ENCODE measurements at regions of chr18 and their contacts with region 1.

Region 1: GRCh38 chr18:9136315-9137155 is at the start of gene ANKRD12:
- DNase-seq: peak; percentile 98
- ATAC-seq: peak; percentile 77
- H3K4me3 Mint-ChIP-seq: peak within 1 kb of the TSS; percentile 96
- H3K27ac Mint-ChIP-seq: peak within 1 kb of the TSS; percentile 99
- H3K4me1 Mint-ChIP-seq: peaks cover 56% of the 10 kb centered on the region
- H3K27me3 Mint-ChIP-seq: no peaks in the 10 kb centered on the region
- total RNA-seq, gene ANKRD12: 60.8 to 68.9 TPM

Region 2: DNA sequence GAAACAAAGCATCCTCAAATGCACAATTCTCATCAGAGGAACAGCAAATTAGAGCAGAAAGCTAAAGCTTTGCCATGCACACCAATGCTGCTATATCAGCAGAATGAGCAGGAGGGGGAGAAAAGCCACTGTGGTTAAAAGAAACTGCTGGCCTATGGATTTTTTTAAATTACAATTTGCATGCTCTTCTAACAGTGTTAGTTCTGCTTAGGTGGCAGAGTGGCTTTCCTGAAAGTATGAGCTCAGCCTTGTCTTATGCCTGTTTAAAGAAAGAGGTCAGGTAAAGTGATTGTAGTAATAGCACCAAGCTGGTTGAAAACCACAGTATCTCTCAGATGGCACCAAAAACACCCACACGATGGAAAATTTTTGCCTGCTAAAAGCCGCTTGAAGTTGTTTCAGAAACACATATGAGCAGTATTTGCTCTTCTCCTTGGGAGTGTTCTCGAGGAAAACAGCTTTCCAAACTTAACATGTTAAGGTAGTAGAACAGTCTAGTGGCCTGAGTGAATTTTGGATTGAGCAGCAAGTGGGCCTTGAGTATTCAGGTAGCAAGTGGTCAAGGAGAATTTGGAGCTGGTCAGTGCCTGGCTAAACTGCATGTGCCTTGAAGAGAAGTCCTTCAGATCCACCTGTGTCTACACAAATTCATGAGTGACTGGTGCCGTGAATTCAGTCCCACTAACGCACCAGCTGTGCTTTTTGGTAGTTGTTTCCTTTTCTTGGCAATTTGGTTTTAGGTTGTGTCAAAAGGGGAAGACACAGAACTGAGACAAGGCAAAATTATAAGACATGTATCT is 53.6 kb before region 1 on chr18:
- CTCF ChIA-PET with region 1: interaction called, 9 read pairs
- POLR2A ChIA-PET with region 1: interaction called, 62 read pairs
- DNase-seq: peak; percentile 66
- ATAC-seq: peak; percentile 85
- H3K4me3 Mint-ChIP-seq: peak overlapping the region; percentile 56
- H3K27ac Mint-ChIP-seq: peak overlapping the region; percentile 94
- H3K4me1 Mint-ChIP-seq: peaks cover 48% of the 10 kb centered on the region
- H3K27me3 Mint-ChIP-seq: no peaks in the 10 kb centered on the region

Region 3: DNA sequence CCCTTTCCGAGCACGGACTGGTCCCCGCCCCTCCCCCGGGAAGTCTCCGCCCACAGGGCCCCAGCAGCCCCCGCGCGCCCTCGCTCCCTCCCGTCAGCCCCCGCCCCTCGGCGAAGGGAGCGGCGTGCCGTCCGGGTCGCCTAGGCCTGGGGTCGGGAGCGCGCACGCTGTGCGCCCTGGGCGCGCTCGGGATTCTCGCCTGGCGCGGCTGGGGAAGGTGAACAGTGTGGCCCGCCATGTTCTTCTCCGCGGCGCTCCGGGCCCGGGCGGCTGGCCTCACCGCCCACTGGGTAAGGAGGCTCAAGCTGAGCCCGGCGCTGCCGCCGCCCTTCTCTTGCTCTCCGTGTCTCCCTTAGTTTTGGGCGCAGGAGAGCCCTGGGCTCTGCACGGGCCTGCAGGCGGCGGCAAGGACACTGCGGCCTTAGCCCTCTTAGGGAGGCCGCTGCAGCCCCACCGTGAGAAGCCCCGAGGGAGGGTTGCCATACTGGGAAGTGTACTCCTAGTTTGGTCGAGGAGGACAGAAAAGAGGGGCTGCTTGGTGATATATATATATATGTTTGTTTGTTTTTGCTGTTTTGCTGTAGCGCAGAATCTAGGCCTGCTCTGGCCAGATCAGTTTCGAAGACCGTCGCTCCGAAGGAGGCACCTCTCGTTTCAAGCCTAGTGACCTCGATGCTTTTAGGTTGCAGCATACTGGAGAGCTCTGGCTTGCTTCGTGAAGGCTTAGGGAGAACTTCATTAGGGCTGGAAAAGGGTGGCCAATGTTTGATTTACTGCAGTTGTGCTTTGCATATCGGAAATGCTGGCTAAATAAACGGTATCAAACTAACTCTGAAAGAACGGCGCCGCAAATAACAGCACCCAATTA is 33.8 kb before region 1 on chr18 and contains the start of gene NDUFV2:
- CTCF ChIA-PET with region 1: interaction called, 49 read pairs
- POLR2A ChIA-PET with region 1: interaction called, 230 read pairs
- DNase-seq: peak; percentile 98
- ATAC-seq: peak; percentile 91
- H3K4me3 Mint-ChIP-seq: peak within 1 kb of the TSS; percentile 89
- H3K27ac Mint-ChIP-seq: peak within 1 kb of the TSS; percentile 97
- H3K4me1 Mint-ChIP-seq: peaks cover 48% of the 10 kb centered on the region
- H3K27me3 Mint-ChIP-seq: no peaks in the 10 kb centered on the region
- total RNA-seq, gene NDUFV2: 200 to 206 TPM

Region 4: DNA sequence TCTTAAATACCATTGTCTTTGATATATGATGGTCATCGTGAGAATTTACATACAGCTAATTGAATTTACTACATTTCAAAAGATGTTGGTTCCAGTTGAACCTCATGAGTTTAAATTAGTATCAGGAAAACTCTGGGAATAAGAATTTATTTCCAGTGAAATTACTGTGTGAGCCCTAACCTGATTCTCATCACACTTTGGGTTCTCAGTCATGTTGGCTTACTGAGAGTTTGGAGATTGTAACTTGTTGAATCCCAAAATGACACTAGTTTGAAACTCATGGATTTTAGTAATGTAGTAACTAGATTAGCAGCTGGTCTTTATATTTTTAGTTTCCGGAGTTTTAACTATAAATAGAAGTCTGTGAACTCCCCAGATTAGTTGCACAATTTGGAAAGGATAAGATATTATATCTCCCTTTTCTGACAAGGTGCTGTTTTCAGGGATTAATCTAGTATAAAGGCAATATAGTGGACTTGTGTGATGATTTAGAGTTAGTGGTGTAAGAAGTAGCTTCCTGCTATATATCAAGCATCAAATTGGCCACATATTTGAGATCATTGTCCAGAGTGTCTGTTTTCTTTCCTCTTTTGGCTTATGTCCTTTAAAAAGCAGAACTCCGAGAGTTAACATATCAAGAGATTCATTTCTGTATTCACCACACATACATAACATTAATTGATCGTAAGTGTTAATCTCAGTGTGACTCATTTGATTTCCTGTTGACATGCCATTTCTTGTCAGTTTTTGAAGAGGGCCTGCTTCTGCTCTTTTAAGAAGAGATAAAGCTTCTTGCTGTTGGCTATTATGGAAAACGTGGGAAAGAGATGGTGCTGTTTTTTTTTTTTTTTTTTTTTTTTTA is 18.3 kb before region 1 on chr18:
- CTCF ChIA-PET with region 1: interaction called, 6 read pairs
- POLR2A ChIA-PET with region 1: interaction called, 20 read pairs
- DNase-seq: no peak
- ATAC-seq: peak; percentile 48
- H3K4me3 Mint-ChIP-seq: peak overlapping the region; percentile 59
- H3K27ac Mint-ChIP-seq: peak overlapping the region; percentile 86
- H3K4me1 Mint-ChIP-seq: peaks cover 75% of the 10 kb centered on the region
- H3K27me3 Mint-ChIP-seq: no peaks in the 10 kb centered on the region

Region 5: DNA sequence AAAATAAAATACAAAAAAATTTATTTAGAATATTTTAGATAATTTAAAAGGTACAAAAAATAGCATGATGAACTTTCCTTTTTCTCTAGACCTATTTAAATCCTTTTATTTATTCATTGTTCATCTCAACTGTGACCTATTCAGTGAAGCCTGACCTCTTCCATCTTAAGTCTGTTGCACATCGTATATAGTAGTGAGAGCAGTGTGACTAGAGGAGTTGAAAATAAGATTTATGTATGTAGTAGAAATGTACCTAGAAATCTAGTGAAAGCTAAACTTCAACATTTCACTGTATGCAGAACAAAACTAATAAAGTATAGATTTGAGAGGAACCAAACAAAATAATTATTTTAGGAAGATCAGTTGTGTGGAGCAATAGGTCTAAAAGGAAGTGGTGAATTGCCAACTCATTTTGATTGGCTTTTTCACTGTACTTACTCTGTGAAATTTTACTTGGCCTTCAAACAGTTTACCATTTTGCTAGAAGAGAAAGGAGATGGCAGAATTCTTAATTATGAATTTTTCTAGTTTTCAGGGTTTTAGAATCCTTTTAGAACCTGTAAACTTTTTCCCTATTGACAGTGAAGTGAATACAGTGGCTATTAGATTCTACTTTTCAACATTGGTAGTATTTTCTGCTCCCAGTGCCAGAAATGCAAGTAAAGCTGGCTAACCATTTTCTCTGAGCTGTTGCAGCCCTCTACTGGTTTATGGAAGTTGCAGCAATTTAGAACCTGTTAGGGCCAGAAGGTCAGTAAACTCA is 11.1 kb after region 1 on chr18:
- CTCF ChIA-PET with region 1: interaction called, 11 read pairs
- POLR2A ChIA-PET with region 1: interaction called, 3 read pairs
- DNase-seq: peak; percentile 61
- ATAC-seq: peak; percentile 74
- H3K4me3 Mint-ChIP-seq: peak overlapping the region; percentile 1
- H3K27ac Mint-ChIP-seq: peak overlapping the region; percentile 69
- H3K4me1 Mint-ChIP-seq: peaks cover 75% of the 10 kb centered on the region
- H3K27me3 Mint-ChIP-seq: no peaks in the 10 kb centered on the region